Naive thymus-derived CD4-positive, alpha-beta T cell (primary cell): ENCODE measurements at regions of chr11 and their contacts with region 1.

Region 1: GRCh38 chr11:68030318-68031138 is at the start of gene NDUFS8:
- DNase-seq: peak; percentile 83 to 99 (median 98)
- ATAC-seq: peak; percentile 98
- H3K4me3 ChIP-seq: peak within 1 kb of the TSS; percentile 98
- H3K4me3 Mint-ChIP-seq: peak within 1 kb of the TSS; percentile 90 to 99 (median 96)
- H3K27ac ChIP-seq: peak within 1 kb of the TSS; percentile 97
- H3K27ac Mint-ChIP-seq: peak within 1 kb of the TSS; percentile 73 to 98 (median 92)
- H3K4me1 ChIP-seq: peaks cover 11 to 16% of the 10 kb centered on the region in 2 donors
- H3K4me1 Mint-ChIP-seq: peaks cover 12 to 32% (median 23%) of the 10 kb centered on the region in 7 donors
- H3K27me3 ChIP-seq: no peaks in the 10 kb centered on the region
- H3K27me3 Mint-ChIP-seq: no peaks in the 10 kb centered on the region
- total RNA-seq, gene NDUFS8: 67.1 to 126 (median 80.1) TPM

Region 2: DNA sequence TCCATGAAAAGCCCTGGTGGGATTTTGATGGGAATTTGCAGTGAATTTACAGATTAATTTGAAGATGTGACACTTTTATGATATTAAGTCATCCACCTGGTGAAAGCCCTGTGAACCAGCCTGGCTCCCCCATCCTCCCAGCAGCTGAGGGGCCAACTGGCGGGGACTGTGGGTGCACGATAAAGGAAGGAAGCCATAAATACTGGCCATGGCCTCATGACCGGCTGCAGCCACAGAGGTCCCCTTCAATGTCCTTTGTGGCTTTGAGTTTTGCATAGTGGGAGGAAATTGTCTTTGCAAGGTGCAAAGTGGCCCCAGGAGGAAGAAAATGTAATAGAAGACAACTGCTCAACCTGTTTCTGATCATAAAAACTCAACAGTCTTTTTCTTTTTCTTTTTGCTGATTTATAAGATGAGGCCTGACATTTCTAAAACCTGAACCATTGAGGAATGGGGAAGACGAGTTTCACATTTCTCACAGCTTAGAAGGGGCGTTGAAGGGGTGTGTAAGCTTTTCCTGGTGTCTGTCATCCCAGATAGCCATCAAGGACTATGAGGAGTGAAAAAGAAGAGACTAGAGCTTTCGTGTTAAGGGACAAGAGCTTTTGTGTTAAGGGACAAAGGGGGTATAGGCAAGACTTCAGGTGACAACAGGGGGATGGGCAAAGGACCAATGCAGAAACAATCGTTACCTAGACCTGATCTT is 430.1 kb before region 1 on chr11:
- CTCF ChIA-PET with region 1: no interaction called
- POLR2A ChIA-PET with region 1: no interaction called
- intact Hi-C with region 1: no loop called
- DNase-seq: no peak
- ATAC-seq: no peak
- H3K4me3 ChIP-seq: no peak overlapping the region
- H3K4me3 Mint-ChIP-seq: no peak overlapping the region
- H3K27ac ChIP-seq: no peak overlapping the region
- H3K27ac Mint-ChIP-seq: peak overlapping the region in 1 of 9 donors; percentile 10
- H3K4me1 ChIP-seq: no peaks in the 10 kb centered on the region
- H3K4me1 Mint-ChIP-seq: peaks cover 0 to 11% (median 5%) of the 10 kb centered on the region in 7 donors
- H3K27me3 ChIP-seq: no peaks in the 10 kb centered on the region
- H3K27me3 Mint-ChIP-seq: peaks cover 5 to 50% (median 23%) of the 10 kb centered on the region in 5 donors

Region 3: GRCh38 chr11:68003846-68004550 is 26.5 kb before region 1 on chr11 and contains the start of gene UNC93B1:
- CTCF ChIA-PET with region 1: no interaction called
- POLR2A ChIA-PET with region 1: interaction called, 5 read pairs
- intact Hi-C with region 1: loop called (anchors 1 kb)
- DNase-seq: peak; percentile 54 to 85 (median 69)
- ATAC-seq: peak; percentile 93
- H3K4me3 ChIP-seq: peak within 1 kb of the TSS; percentile 64
- H3K4me3 Mint-ChIP-seq: peak within 1 kb of the TSS; percentile 82 to 93 (median 86)
- H3K27ac ChIP-seq: peak within 1 kb of the TSS; percentile 66
- H3K27ac Mint-ChIP-seq: peak within 1 kb of the TSS; percentile 74 to 92 (median 85)
- H3K4me1 ChIP-seq: peaks cover 6 to 8% of the 10 kb centered on the region in 2 donors
- H3K4me1 Mint-ChIP-seq: peaks cover 0 to 24% (median 20%) of the 10 kb centered on the region in 7 donors
- H3K27me3 ChIP-seq: no peaks in the 10 kb centered on the region
- H3K27me3 Mint-ChIP-seq: no peaks in the 10 kb centered on the region
- total RNA-seq, gene UNC93B1: 10.1 to 76.3 (median 21.1) TPM

Region 4: DNA sequence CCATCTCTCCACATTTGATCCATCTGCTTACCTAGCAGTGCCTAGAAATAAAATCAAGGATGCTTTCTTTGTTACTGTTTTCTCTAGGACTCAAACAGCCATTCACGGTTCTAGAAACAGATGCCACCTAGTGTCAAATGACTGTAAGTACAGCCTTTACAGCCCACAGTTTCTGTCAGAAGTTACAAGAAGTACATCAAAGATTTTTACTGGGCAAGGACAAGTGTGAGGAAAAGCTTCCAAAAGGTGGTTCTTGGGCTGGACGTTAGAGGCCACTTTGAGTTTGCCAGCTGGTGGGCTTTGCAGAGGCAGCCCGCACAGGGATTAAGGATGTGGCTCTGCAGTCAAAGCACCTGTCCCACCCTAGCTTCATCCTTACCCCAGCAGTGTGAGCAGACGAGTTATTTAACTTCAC is 175.7 kb after region 1 on chr11:
- CTCF ChIA-PET with region 1: no interaction called
- POLR2A ChIA-PET with region 1: no interaction called
- intact Hi-C with region 1: loop called (anchors 1 to 10 kb)
- DNase-seq: peak in 7 of 9 donors; percentile 35 to 65 (median 55)
- ATAC-seq: peak; percentile 82
- H3K4me3 ChIP-seq: no peak overlapping the region
- H3K4me3 Mint-ChIP-seq: peak overlapping the region in 7 of 10 donors; percentile 5 to 60 (median 25)
- H3K27ac ChIP-seq: no peak overlapping the region
- H3K27ac Mint-ChIP-seq: peak overlapping the region in 5 of 9 donors; percentile 7 to 73 (median 43)
- H3K4me1 ChIP-seq: peaks cover 23 to 48% of the 10 kb centered on the region in 2 donors
- H3K4me1 Mint-ChIP-seq: peaks cover 38 to 91% (median 71%) of the 10 kb centered on the region in 7 donors
- H3K27me3 ChIP-seq: no peaks in the 10 kb centered on the region
- H3K27me3 Mint-ChIP-seq: no peaks in the 10 kb centered on the region

Region 5: GRCh38 chr11:68213555-68214174 is 183.1 kb after region 1 on chr11:
- CTCF ChIA-PET with region 1: no interaction called
- POLR2A ChIA-PET with region 1: no interaction called
- intact Hi-C with region 1: loop called in 1 of 2 experiments (anchors 10 kb)
- DNase-seq: peak; percentile 69 to 92 (median 86)
- ATAC-seq: peak; percentile 70
- H3K4me3 ChIP-seq: peak overlapping the region; percentile 81
- H3K4me3 Mint-ChIP-seq: peak overlapping the region; percentile 69 to 98 (median 78)
- H3K27ac ChIP-seq: peak overlapping the region; percentile 88
- H3K27ac Mint-ChIP-seq: peak overlapping the region in 7 of 9 donors; percentile 35 to 99 (median 92)
- H3K4me1 ChIP-seq: peaks cover 27% of the 10 kb centered on the region in 2 donors
- H3K4me1 Mint-ChIP-seq: peaks cover 35 to 50% (median 45%) of the 10 kb centered on the region in 7 donors
- H3K27me3 ChIP-seq: no peaks in the 10 kb centered on the region
- H3K27me3 Mint-ChIP-seq: peaks cover 0 to 28% (median 0%) of the 10 kb centered on the region in 5 donors

Region 6: GRCh38 chr11:69280994-69281393 is 1250.5 kb after region 1 on chr11:
- CTCF ChIA-PET with region 1: no interaction called
- POLR2A ChIA-PET with region 1: no interaction called
- intact Hi-C with region 1: no loop called
- DNase-seq: no peak
- ATAC-seq: no peak
- H3K4me3 ChIP-seq: no peak overlapping the region
- H3K4me3 Mint-ChIP-seq: no peak overlapping the region
- H3K27ac ChIP-seq: no peak overlapping the region
- H3K27ac Mint-ChIP-seq: no peak overlapping the region
- H3K4me1 ChIP-seq: no peaks in the 10 kb centered on the region
- H3K4me1 Mint-ChIP-seq: no peaks in the 10 kb centered on the region
- H3K27me3 ChIP-seq: no peaks in the 10 kb centered on the region
- H3K27me3 Mint-ChIP-seq: peaks cover 0 to 7% (median 0%) of the 10 kb centered on the region in 5 donors